ENCODE measurements at regions of chr17 and their contacts with region 1.

Region 1: GRCh38 chr17:66715745-66716156 is 119.2 kb upstream of the CACNG5 start:
- DNase-seq: no peak
- H3K4me3 ChIP-seq: no peak overlapping the region
- H3K27ac ChIP-seq: peak overlapping the region in 3 of 4 donors; percentile 33 to 56 (median 39)
- H3K4me1 ChIP-seq: peaks cover 0 to 25% (median 19%) of the 10 kb centered on the region in 4 donors
- H3K27me3 ChIP-seq: no peaks in the 10 kb centered on the region
- CTCF ChIP-seq: peak; percentile 46 to 75 (median 66)
- EP300 ChIP-seq: no peak
- POLR2A ChIP-seq: no peak

Region 2: DNA sequence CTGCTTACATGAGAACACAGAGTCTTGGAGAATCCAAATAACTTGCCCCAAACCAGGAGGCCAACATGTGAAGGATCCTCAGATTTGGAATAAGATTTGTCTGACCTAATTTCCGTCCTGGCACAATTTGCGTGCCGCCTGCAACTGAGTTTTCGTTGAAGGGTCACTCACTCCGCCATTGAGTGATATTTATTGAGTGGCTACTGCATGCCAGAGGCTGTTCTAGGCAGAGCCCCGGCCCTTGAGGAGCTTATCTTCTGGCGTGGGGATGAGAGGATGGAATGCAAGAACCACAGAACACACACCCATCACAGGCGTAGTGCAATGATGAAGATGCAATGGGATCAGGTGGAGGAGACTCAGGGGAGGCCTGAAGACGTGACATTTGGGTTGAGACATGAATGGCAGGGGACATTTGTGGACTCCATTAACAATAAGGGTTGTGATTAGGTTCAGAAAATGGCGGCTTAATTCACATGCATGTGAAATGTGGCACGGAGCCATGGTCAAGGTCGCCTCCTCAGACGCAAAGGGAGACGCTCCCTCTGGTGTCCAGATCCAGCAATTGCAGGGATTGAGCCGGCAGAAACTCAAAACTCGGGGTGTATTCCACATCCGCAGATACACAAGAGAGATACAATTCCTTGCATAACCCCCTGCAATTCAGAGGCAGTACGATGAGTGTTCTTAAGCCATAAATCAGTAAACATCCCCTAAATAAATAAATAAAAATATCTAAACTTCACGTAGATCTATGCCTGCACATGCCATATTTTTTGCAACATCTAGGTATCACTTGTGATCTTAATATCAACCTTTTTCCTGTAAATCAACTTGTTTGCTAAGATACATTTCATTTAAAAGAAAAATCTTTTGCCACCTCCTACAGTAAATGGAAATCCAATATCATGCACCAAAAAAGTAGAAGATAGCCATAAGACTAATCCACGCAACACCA is 190.8 kb after region 1 on chr17:
- intact Hi-C with region 1: loop called (anchors 1 kb)
- DNase-seq: peak; percentile 86
- H3K4me3 ChIP-seq: no peak overlapping the region
- H3K27ac ChIP-seq: no peak overlapping the region
- H3K4me1 ChIP-seq: peaks cover 0 to 11% (median 4%) of the 10 kb centered on the region in 4 donors
- H3K27me3 ChIP-seq: no peaks in the 10 kb centered on the region
- CTCF ChIP-seq: peak; percentile 44 to 88 (median 82)
- EP300 ChIP-seq: no peak
- POLR2A ChIP-seq: no peak

Measured in sigmoid colon (tissue), 7 donors.